CD8-positive, alpha-beta memory T cell (primary cell): ENCODE measurements at regions of chr9 and their contacts with region 1.

Region 1: DNA sequence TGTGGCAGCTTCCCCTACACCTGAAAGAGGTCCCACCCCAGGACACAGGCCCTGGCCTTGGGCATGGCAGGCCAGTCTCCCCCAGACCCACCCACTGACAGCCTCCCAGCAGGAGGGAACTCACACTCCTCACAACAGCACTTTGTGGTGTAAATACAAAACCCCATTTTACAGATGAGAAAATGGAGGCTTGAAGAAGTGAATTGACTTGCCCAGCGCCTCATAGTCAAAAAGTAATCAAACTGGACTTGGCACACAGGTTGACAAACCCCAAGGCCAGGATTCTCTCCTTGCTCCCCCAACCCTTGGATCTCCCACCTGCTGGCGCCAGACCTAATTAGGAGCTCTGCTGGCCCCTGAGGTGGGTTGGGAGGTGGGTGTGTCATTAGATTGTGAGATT is 29.2 kb upstream of the NEK6 start:
- DNase-seq: no peak
- H3K4me3 ChIP-seq: no peak overlapping the region
- H3K4me3 Mint-ChIP-seq: no peak overlapping the region
- H3K27ac ChIP-seq: no peak overlapping the region
- H3K27ac Mint-ChIP-seq: no peak overlapping the region
- H3K4me1 ChIP-seq: no peaks in the 10 kb centered on the region
- H3K4me1 Mint-ChIP-seq: peaks cover 0 to 8% (median 5%) of the 10 kb centered on the region in 3 donors
- H3K27me3 ChIP-seq: no peaks in the 10 kb centered on the region
- H3K27me3 Mint-ChIP-seq: peaks cover 0 to 2% of the 10 kb centered on the region in 2 donors

Region 2: DNA sequence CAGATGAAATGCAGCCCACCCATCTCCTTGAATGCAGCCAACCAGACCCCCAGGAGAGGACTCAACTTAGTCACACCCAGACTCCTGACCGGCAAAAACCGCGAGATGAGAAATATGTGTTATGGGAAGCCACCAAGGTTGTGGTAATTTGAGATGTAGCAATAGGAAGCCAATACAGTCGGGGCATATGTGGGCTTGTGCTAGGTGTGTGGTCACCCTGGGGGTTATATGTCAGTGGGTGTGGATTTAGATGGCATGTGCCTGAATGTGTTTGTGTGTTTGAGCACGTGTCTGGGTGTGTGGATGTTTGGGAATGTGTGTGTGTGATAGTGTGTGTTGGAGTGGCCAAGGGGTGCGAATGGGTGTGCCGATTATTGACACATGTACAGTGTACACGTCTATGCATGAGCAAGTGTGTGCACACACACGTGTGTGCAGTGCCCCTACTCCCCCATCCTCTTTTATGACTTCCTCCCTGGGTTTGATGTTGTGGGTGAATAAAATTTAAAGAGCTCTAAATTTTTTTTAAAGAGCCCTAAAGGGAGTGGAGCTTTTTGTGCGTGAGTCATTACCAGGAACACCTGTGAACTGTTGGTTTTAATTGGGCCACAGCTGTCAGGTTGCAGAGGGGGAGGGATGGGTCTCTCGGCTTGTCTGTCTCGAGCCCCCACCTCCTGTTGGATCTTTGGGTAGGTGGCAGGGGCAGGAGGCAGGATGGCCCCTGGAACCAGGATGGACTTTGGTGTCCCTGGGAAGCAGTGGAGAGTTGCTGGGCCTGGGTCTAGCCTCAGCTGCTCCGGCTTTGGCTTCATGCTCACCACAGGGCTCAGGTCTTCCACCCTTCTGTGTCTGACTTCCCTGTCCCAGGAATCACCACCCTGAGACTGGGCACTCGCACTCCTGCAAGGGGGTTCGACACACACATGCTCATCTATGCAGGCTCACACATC is 130.1 kb before region 1 on chr9:
- CTCF ChIA-PET with region 1: no interaction called
- POLR2A ChIA-PET with region 1: no interaction called
- DNase-seq: no peak
- H3K4me3 ChIP-seq: no peak overlapping the region
- H3K4me3 Mint-ChIP-seq: no peak overlapping the region
- H3K27ac ChIP-seq: no peak overlapping the region
- H3K27ac Mint-ChIP-seq: peak overlapping the region in 1 of 8 donors; percentile 46
- H3K4me1 ChIP-seq: no peaks in the 10 kb centered on the region
- H3K4me1 Mint-ChIP-seq: no peaks in the 10 kb centered on the region
- H3K27me3 ChIP-seq: no peaks in the 10 kb centered on the region
- H3K27me3 Mint-ChIP-seq: peaks cover 13 to 25% of the 10 kb centered on the region in 2 donors

Region 3: GRCh38 chr9:124218438-124218982 is 10.0 kb before region 1 on chr9:
- CTCF ChIA-PET with region 1: no interaction called
- POLR2A ChIA-PET with region 1: interaction called, 11 read pairs
- DNase-seq: no peak
- H3K4me3 ChIP-seq: no peak overlapping the region
- H3K4me3 Mint-ChIP-seq: peak overlapping the region in 3 of 7 donors; percentile 10 to 72 (median 28)
- H3K27ac ChIP-seq: no peak overlapping the region
- H3K27ac Mint-ChIP-seq: peak overlapping the region in 2 of 8 donors; percentile 70 to 73
- H3K4me1 ChIP-seq: peaks cover 57% of the 10 kb centered on the region
- H3K4me1 Mint-ChIP-seq: peaks cover 67 to 76% (median 75%) of the 10 kb centered on the region in 3 donors
- H3K27me3 ChIP-seq: no peaks in the 10 kb centered on the region
- H3K27me3 Mint-ChIP-seq: no peaks in the 10 kb centered on the region

Region 4: DNA sequence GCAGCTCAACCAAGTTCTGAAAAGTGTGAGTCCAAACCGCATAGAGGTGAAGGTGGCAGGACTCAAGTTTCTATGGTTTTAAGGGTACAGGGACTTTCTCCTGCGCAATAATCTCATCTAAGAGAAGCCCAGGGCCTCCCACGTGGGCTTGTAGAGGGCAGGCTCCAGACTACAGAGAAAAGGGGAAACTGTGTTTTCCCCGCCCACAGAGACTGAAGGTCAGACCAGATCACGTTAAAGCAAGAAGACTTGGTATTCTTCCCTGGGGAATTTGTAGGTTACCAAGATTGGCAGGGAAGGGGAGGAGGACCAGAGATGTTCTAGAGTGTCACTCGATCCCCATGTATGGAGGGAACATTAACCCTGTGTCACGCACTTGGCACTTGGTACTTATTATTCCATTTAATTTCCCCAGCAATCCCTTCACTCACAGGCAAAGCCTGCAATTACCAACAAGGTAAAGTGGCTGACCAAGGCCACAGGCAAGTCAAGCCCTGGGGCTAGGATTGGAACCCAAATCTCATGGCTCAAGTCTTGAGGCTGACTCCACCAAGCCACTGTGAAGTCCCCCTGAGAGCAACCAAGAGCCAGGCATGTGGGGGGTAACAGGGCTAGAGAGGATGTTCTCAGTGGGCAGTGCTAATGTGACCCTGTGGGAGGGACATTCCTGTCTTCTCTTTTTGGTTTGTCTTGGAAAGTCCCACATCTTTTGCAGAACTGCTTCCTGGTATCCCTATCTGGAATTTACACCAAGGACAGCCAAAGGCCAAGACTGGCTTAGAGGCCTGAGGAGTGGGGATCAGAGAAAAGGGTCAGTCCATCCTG is 10.9 kb after region 1 on chr9:
- CTCF ChIA-PET with region 1: no interaction called
- POLR2A ChIA-PET with region 1: no interaction called
- DNase-seq: no peak
- H3K4me3 ChIP-seq: no peak overlapping the region
- H3K4me3 Mint-ChIP-seq: peak overlapping the region in 5 of 7 donors; percentile 19 to 75 (median 70)
- H3K27ac ChIP-seq: no peak overlapping the region
- H3K27ac Mint-ChIP-seq: peak overlapping the region; percentile 7 to 95 (median 82)
- H3K4me1 ChIP-seq: peaks cover 23% of the 10 kb centered on the region
- H3K4me1 Mint-ChIP-seq: peaks cover 35 to 50% (median 37%) of the 10 kb centered on the region in 3 donors
- H3K27me3 ChIP-seq: no peaks in the 10 kb centered on the region
- H3K27me3 Mint-ChIP-seq: no peaks in the 10 kb centered on the region

Region 5: DNA sequence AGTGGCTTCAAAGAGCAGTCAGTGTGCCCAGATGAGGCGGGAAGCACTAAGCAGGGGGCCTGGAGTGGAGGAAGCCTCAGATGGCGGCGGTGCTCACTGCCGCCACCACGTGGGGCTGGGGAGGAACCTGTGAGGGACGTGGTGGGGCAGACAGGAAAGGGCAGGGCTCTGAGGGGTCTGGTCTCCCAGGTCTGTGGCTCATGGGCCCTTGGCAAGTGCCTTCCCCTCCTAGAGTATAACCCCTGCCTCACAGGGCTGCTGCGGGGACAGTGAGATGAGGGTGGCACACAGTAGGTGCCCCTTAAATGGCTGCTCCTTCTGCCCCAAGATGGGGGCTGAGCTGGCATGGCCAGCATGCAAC is 252.1 kb after region 1 on chr9:
- CTCF ChIA-PET with region 1: no interaction called
- POLR2A ChIA-PET with region 1: no interaction called
- DNase-seq: no peak
- H3K4me3 ChIP-seq: no peak overlapping the region
- H3K4me3 Mint-ChIP-seq: no peak overlapping the region
- H3K27ac ChIP-seq: no peak overlapping the region
- H3K27ac Mint-ChIP-seq: no peak overlapping the region
- H3K4me1 ChIP-seq: no peaks in the 10 kb centered on the region
- H3K4me1 Mint-ChIP-seq: no peaks in the 10 kb centered on the region
- H3K27me3 ChIP-seq: no peaks in the 10 kb centered on the region
- H3K27me3 Mint-ChIP-seq: peaks cover 7 to 21% of the 10 kb centered on the region in 2 donors